ENCODE measurements at regions of chr17 and their contacts with region 1.

Region 1: GRCh38 chr17:55421179-55421934 is at the start of gene MMD:
- DNase-seq: peak in 3 of 5 donors; percentile 37 to 61 (median 45)
- ATAC-seq: peak in 3 of 4 donors; percentile 4 to 16 (median 8)
- H3K4me3 ChIP-seq: peak within 1 kb of the TSS; percentile 69 to 99 (median 96)
- H3K27ac ChIP-seq: peak within 1 kb of the TSS; percentile 63 to 96 (median 91)
- H3K4me1 ChIP-seq: peaks cover 0 to 38% (median 16%) of the 10 kb centered on the region in 12 donors
- H3K27me3 ChIP-seq: peaks cover 0 to 7% (median 0%) of the 10 kb centered on the region in 9 donors
- CTCF ChIP-seq: no peak
- POLR2A ChIP-seq: peak; percentile 57 to 68
- total RNA-seq, gene MMD: 8.8 to 25.0 (median 12.5) TPM

Region 2: DNA sequence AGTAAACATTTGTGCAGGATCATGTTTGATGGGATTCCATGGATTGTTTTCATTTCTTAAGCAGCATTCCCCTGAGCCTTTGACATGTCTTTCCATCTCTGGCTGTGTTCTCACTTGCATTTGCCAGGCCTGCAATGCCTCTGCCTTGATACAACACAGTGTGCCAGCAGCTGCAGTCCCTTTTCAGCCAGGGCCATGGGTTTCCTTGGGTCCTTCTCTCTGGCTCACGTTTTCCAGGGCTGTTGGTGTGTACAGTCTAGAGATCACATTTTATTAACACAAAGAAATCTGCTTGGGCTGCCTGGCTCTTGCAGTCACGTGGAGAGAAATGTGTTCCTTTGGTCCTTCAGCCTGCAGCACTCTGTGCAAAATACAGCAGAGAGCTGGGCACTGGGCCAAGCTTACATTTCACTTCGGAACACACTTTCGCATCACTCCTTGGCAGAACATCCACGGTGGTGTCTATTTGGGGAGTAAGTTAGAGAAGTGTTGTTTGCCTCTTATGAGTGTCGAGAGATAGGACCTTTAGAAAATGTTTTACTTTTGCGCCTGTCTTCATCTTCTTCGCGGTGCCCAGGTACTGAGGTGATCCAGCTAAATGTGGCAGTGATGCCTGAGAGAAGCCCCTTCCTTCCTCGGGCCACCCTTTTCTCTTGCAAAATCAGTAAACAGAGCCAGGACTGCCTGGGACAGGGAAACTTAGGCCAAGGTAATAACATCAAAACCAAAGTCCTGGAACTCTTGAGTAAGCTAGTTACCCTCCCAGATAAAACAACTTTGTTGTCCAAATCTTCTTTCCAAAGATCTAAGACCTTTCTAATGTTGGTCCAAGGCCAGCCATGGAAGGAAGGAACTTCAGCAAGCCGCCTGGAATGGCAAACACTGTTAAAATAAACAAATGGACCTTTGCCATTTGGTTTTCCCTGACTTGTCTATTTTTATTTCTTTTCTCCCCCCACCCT is 135.7 kb before region 1 on chr17:
- intact Hi-C with region 1: loop called in 3 of 10 experiments (anchors 10 kb)
- DNase-seq: peak; percentile 87 to 98 (median 92)
- ATAC-seq: peak; percentile 86 to 91 (median 90)
- H3K4me3 ChIP-seq: peak overlapping the region in 3 of 12 donors; percentile 6 to 23 (median 17)
- H3K27ac ChIP-seq: peak overlapping the region; percentile 79 to 98 (median 90)
- H3K4me1 ChIP-seq: peaks cover 0 to 94% (median 57%) of the 10 kb centered on the region in 12 donors
- H3K27me3 ChIP-seq: no peaks in the 10 kb centered on the region
- CTCF ChIP-seq: no peak
- POLR2A ChIP-seq: no peak

Region 3: DNA sequence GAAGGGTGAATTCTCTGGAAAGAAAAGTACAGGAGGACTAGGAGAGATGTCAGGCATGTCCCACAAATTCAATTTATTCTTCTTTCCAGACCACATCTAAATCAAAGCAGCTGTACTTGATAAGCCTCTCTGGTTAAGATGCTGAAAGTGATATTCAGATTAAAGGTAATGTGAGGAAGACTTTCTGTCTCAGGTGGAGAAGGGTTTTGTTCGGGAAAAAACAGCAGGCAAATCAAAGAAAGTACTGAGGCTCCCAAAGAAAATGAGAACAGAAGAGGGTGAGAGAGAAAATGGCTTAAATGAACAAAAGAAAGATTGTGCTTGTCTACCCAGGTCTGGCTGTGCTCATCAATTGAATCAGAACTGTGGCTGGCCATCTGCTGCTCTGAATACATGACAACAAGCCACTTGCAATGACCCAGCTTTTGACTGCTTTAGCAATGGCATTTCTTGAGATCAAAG is 55.3 kb before region 1 on chr17:
- intact Hi-C with region 1: no loop called
- DNase-seq: no peak
- ATAC-seq: no peak
- H3K4me3 ChIP-seq: no peak overlapping the region
- H3K27ac ChIP-seq: no peak overlapping the region
- H3K4me1 ChIP-seq: no peaks in the 10 kb centered on the region
- H3K27me3 ChIP-seq: no peaks in the 10 kb centered on the region
- CTCF ChIP-seq: no peak
- POLR2A ChIP-seq: no peak

Region 4: GRCh38 chr17:55463600-55463999 is 42.2 kb after region 1 on chr17:
- intact Hi-C with region 1: no loop called
- DNase-seq: no peak
- ATAC-seq: no peak
- H3K4me3 ChIP-seq: no peak overlapping the region
- H3K27ac ChIP-seq: no peak overlapping the region
- H3K4me1 ChIP-seq: peaks cover 0 to 14% (median 0%) of the 10 kb centered on the region in 12 donors
- H3K27me3 ChIP-seq: no peaks in the 10 kb centered on the region
- CTCF ChIP-seq: no peak
- POLR2A ChIP-seq: no peak

Region 5: DNA sequence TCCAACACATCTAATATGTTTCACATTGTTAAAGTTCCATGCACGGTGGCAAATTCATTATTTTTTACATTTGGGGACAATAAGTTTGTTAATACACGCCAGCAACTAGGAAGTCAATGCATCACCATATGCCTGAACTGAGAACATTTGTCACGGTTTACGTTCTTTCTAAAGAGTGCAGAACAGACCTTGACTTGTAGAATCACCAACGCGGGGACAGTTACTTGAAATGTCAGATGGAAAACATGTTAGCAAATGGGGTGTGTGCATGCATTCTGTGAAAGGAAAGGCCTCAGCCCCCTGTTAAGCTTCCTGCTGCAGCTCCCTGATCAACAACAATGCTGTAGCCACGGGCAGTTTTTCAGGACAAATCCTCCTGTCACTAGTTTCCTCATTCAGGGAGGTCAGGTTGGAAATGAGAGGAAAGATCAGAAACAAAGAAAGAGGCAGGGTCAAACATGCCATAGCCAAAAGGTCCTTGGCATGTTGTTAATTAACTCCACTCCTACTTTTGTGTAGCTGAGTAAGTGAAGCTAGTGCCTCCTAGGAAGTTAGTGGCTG is 71.5 kb after region 1 on chr17:
- intact Hi-C with region 1: loop called in 1 of 10 experiments (anchors 5 kb)
- DNase-seq: no peak
- ATAC-seq: no peak
- H3K4me3 ChIP-seq: no peak overlapping the region
- H3K27ac ChIP-seq: no peak overlapping the region
- H3K4me1 ChIP-seq: peaks cover 0 to 12% (median 0%) of the 10 kb centered on the region in 12 donors
- H3K27me3 ChIP-seq: no peaks in the 10 kb centered on the region
- CTCF ChIP-seq: no peak
- POLR2A ChIP-seq: no peak

Region 6: GRCh38 chr17:55635253-55635914 is 214.0 kb after region 1 on chr17:
- intact Hi-C with region 1: loop called in 1 of 10 experiments (anchors 10 kb)
- DNase-seq: peak in 2 of 5 donors; percentile 18 to 39
- ATAC-seq: peak; percentile 71 to 91 (median 80)
- H3K4me3 ChIP-seq: peak overlapping the region in 5 of 12 donors; percentile 4 to 26 (median 15)
- H3K27ac ChIP-seq: peak overlapping the region in 6 of 12 donors; percentile 1 to 36 (median 17)
- H3K4me1 ChIP-seq: peaks cover 0 to 20% (median 7%) of the 10 kb centered on the region in 12 donors
- H3K27me3 ChIP-seq: peaks cover 0 to 20% (median 0%) of the 10 kb centered on the region in 9 donors
- CTCF ChIP-seq: no peak
- POLR2A ChIP-seq: no peak

Region 7: GRCh38 chr17:55750750-55751657 is 329.6 kb after region 1 on chr17 and contains the start of gene PCTP:
- intact Hi-C with region 1: loop called in 1 of 10 experiments (anchors 10 kb)
- DNase-seq: peak; percentile 94 to 98 (median 97)
- ATAC-seq: peak; percentile 99 to 100 (median 100)
- H3K4me3 ChIP-seq: peak within 1 kb of the TSS; percentile 58 to 96 (median 88)
- H3K27ac ChIP-seq: peak within 1 kb of the TSS; percentile 82 to 98 (median 92)
- H3K4me1 ChIP-seq: peaks cover 0 to 20% (median 13%) of the 10 kb centered on the region in 12 donors
- H3K27me3 ChIP-seq: no peaks in the 10 kb centered on the region
- CTCF ChIP-seq: peak in 11 of 12 donors; percentile 17 to 64 (median 34)
- POLR2A ChIP-seq: peak in 1 of 2 donors; percentile 89
- total RNA-seq, gene PCTP: 14.8 to 22.6 (median 18.6) TPM

Measured in heart left ventricle (tissue), 16 donors.